A673 (cell line): ENCODE measurements at regions of chr14 and their contacts with region 1.

Region 1: GRCh38 chr14:79543971-79544697 is 667.2 kb downstream of the DIO2 start:
- DNase-seq: peak; percentile 40
- H3K4me3 ChIP-seq: no peak overlapping the region
- H3K27ac ChIP-seq: no peak overlapping the region
- H3K4me1 ChIP-seq: no peaks in the 10 kb centered on the region
- H3K27me3 ChIP-seq: no peaks in the 10 kb centered on the region
- CTCF ChIP-seq: peak; percentile 72

Region 2: DNA sequence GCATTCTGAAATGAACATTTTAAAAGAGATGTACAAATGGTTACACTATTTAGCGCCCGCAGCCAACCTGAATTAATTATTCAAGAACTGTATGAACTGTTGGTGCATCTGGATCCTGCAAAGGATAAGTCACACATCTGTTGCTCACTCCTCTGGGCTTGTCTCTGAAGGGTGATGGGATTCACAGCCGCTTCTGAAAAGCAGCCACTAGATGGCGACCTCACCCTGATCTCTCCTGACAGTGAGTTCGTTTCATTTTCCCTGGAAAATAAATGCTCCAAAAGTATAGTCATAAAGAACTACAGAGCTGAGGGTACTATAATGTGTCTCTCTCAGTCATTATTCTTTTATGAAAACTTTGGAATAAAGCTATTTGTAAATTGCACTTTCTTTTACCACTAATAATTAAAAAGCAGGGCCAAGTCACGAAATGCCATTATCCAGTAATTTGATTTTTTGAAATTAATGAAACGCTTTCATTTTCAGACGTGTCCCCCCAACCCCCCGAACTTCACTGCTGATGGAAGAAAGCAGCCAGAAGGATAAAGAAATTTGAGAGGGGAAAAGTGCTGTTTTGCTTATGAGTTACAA is 584.4 kb before region 1 on chr14:
- CTCF ChIA-PET with region 1: no interaction called
- POLR2A ChIA-PET with region 1: no interaction called
- intact Hi-C with region 1: loop called (anchors 10 kb)
- DNase-seq: peak; percentile 74
- H3K4me3 ChIP-seq: no peak overlapping the region
- H3K27ac ChIP-seq: no peak overlapping the region
- H3K4me1 ChIP-seq: no peaks in the 10 kb centered on the region
- H3K27me3 ChIP-seq: peaks cover 5% of the 10 kb centered on the region
- CTCF ChIP-seq: peak; percentile 87

Region 3: DNA sequence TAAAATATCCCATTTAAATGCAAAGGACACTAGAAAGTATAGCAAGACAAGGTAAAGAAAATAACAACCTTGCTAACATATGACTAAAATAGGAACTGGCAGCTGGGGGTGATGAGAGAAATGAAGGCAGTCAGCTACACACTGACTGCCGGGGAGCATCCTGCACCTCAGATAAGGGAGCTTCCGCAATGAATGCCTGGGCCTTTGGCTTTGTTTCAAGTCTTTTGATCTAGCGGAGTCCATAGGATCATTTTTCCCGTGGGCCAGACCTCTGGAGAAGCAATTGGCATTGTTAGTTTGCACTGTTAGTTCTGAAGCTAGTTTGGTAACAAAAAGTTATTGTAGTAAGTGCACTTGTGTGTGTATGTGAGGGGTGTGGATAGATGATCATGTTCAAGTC is 27.2 kb after region 1 on chr14:
- CTCF ChIA-PET with region 1: no interaction called
- POLR2A ChIA-PET with region 1: no interaction called
- intact Hi-C with region 1: no loop called
- DNase-seq: no peak
- H3K4me3 ChIP-seq: no peak overlapping the region
- H3K27ac ChIP-seq: no peak overlapping the region
- H3K4me1 ChIP-seq: peaks cover 29% of the 10 kb centered on the region
- H3K27me3 ChIP-seq: no peaks in the 10 kb centered on the region
- CTCF ChIP-seq: no peak